ENCODE measurements at regions of chr10 and their contacts with region 1.

Region 1: DNA sequence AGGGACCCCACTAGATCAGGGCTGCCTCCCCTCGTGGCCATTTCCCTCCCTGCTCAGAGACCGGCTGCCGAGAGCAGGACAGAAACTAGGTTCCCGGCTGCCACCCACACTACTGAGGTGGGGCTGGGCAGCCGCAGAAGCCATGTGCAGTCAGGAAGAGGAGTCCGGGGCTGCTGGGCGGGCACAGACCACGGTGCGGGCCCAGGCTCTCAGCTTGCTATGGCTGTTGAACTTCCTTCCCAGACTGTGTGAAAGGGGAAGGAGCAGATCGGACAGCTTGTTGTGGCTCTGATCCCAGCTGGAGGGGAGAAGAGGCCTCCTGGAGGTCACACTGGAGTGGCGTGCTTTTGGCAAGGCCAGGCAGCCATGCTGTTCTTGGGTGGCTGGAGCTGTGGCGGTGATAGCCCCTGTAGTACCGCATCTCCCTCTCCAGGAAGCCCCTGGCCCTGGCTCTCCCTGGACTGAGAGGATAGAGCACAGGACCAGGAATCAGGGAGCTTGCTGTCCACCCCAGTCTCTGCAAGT is 56.8 kb downstream of the HK1 start:
- DNase-seq: peak; percentile 51
- H3K4me3 Mint-ChIP-seq: peak overlapping the region; percentile 34
- H3K27ac Mint-ChIP-seq: peak overlapping the region; percentile 77
- H3K4me1 Mint-ChIP-seq: peaks cover 61% of the 10 kb centered on the region
- H3K27me3 Mint-ChIP-seq: no peaks in the 10 kb centered on the region

Region 2: DNA sequence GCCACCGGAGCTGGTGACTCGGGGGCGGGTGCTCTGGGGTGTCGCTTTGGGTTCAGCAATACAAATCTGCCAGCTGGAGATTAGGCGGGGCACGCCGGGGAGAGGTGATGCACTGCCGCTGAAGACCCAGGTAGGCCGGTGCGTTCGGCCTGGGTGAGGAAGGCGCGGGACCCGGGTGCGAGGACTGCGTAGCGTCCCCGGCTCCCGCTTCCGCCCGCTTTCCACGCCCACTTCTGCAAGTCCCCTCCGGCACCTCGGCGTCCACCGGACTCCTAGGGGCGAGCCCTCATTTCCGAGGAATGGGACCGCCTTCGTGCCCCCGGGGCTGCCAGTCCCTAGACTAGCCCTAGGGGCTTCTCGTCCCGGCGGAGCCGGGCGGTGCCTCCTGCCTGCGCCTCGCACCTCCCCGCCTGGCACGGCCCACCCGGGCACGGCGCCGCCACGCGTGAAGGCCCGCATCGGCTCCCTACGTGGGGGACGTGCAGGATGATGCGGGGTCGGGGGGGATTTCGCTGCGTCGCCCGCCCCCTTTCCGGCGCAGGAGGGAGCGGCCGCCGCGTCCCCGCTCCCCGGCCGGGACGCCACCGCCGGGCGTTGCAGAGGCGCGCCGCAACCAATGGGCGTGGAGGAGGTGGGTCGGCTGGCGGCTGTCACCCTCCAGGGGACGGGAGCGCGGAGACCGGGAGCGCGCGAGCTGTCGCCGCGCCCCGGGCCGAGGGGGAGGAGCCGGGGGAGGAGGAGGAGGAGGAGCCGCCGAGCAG is 16.8 kb before region 1 on chr10:
- CTCF ChIA-PET with region 1: interaction called, 7 read pairs
- POLR2A ChIA-PET with region 1: interaction called, 35 read pairs
- DNase-seq: peak; percentile 92
- H3K4me3 Mint-ChIP-seq: peak overlapping the region; percentile 97
- H3K27ac Mint-ChIP-seq: peak overlapping the region; percentile 94
- H3K4me1 Mint-ChIP-seq: peaks cover 55% of the 10 kb centered on the region
- H3K27me3 Mint-ChIP-seq: no peaks in the 10 kb centered on the region

Region 3: DNA sequence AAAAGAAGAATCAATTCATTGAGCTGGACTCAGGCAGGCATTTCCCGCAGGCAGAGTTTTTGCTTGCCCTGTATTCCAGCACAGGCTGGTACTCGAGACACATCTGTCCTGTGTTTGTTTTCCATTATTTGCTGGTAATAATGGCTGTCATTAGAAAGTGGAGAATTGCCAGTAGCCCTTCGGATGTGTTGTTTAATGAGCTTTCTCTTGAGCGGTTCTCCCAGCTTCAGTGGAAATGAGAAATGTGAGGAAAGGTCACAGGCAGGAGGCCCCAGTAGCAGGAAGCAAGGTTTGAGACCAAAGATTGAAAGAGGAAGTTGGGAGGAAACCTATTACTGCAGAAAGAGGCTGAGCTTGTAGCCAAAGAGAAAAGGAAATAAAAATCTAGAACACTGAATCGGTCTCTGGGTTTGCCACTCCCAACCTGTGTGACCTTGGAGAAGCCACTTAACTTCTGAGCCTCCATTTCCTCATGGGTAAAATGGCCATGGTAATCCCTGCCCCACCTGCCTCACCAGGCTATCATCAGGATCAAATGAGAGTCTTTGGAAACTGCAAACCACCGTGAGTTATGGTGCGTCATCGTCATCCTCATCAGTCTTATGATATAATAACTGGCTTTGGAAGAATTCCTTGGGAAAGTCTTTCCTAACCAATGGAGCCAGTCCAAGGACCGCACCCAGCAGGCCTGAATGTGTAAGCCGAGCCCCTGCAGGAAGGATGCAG is 13.9 kb after region 1 on chr10:
- CTCF ChIA-PET with region 1: interaction called, 5 read pairs
- POLR2A ChIA-PET with region 1: interaction called, 14 read pairs
- DNase-seq: no peak
- H3K4me3 Mint-ChIP-seq: peak overlapping the region; percentile 50
- H3K27ac Mint-ChIP-seq: peak overlapping the region; percentile 93
- H3K4me1 Mint-ChIP-seq: peaks cover 63% of the 10 kb centered on the region
- H3K27me3 Mint-ChIP-seq: no peaks in the 10 kb centered on the region

Region 4: DNA sequence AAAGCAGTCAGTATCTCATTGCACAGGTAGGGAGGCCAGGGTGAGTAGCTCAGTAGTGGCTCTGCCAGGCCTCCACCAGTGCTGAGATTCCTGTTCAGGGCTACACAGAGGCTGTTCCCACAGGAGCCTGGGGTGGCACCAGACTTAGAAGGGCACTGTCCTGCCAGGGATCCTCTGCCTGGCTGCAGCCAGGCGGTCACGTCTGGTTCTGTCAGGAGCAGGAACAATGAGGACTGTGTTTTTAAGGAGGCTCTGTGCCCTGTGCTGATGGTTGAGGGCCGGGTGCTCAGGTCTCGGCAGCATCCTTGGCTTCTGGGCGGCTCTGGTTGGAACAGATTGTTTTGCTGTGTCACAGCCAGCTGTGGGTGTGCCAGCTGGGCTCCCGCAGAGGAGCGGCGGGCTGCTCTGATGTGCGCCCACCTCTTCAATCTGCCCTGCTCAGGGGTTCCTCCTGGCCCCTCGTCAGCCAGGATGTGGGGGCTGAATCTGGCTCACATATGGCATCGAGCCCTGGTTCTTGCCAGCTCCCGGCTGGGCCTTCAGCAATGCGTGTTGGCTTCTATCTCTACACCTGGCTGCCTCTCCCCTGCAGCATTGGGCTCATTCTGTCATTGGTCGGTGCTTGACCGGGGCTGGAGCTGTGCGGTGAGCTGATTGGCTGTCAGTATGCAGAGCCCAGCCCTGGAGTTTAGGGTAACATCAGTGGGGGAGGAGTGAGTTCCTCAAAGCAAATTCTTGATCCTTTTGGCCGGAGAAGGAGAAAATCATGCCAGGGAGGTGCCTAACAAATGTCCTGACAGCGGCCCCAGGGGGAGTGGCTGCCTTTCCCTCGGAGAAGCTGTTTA is 40.4 kb after region 1 on chr10:
- CTCF ChIA-PET with region 1: no interaction called
- POLR2A ChIA-PET with region 1: no interaction called
- DNase-seq: no peak
- H3K4me3 Mint-ChIP-seq: no peak overlapping the region
- H3K27ac Mint-ChIP-seq: no peak overlapping the region
- H3K4me1 Mint-ChIP-seq: peaks cover 6% of the 10 kb centered on the region
- H3K27me3 Mint-ChIP-seq: no peaks in the 10 kb centered on the region

Region 5: GRCh38 chr10:69425511-69426298 is 90.6 kb after region 1 on chr10:
- CTCF ChIA-PET with region 1: no interaction called
- POLR2A ChIA-PET with region 1: no interaction called
- DNase-seq: peak; percentile 34
- H3K4me3 Mint-ChIP-seq: no peak overlapping the region
- H3K27ac Mint-ChIP-seq: no peak overlapping the region
- H3K4me1 Mint-ChIP-seq: peaks cover 46% of the 10 kb centered on the region
- H3K27me3 Mint-ChIP-seq: peaks cover 4% of the 10 kb centered on the region